Dorsolateral prefrontal cortex (tissue), 120 donors: ENCODE measurements at regions of chr14 and their contacts with region 1.

Region 1: DNA sequence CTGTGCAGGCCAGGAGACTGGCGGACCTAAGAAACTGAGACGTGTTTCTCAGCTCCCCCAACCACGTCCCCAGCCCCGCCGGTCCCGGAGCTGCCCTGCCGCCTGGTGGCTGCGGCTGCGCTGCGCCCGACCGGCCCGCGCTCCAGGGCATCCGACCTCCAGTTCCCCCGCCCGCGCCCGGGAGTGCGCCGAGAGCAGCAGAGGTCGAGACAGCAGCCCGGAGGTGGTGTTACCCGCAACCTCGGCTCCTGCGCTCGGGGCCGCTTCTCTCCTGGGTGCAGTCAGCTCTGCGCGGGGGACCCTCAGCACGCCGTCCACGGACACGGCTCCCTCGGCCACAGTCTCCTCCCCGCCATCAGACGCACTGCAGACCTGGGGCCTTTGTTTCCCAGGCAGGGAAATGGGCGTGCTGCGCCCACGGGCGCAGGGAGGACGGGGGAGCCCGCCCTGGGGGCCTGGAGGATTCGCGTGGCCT is 21.6 kb upstream of the GPR132 start:
- DNase-seq: peak in 6 of 10 donors; percentile 41 to 76 (median 62)
- H3K4me3 ChIP-seq: peak overlapping the region in 58 of 59 donors; percentile 19 to 73 (median 58)
- H3K27ac ChIP-seq: peak overlapping the region in 17 of 59 donors; percentile 17 to 74 (median 52)
- H3K27me3 ChIP-seq: peaks cover 0 to 42% (median 0%) of the 10 kb centered on the region in 45 donors
- CTCF ChIP-seq: peak in 55 of 56 donors; percentile 16 to 76 (median 60)

Region 2: DNA sequence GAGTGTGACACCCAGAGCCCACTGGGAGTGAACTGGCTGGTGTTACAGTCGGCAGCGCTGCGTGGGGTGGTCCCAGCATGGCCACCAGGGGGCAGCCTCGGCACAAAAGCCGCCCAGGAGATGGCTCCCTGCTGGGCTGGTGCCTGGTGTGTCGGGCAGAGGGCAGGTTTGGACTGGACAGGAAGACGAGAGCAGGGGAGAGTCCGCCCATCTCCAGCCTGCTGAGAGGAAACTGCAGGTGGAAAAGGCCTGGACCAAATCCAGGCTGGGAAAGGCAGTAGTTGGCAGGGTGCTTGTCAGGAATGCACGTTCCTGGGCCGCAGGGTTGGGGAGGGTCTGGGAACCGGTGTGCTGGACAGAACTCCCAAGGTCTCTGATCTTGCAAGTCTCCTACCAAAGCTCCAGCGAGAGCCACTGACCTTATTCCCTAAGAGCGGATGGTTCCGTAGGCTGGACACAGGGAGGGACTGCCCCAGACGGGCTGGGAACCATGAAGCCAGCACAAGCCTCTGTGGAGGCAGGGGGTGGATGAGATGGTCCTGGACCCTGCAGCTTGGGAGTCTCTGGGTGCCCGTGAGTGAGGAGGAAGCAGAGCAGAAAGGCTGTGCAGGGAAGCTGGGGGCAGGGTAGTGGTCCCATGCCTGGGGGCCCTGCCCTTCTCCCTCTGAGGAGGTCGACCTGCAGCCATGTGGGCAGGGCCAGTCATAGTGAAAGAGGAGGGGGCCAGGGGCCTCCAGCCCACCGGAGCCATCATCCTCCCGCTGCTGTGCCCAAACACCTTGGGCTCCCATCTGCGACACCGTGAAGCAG is 110.5 kb before region 1 on chr14:
- intact Hi-C with region 1: loop called in 1 of 2 experiments (anchors 2 kb)
- DNase-seq: peak; percentile 46 to 81 (median 68)
- H3K4me3 ChIP-seq: peak overlapping the region in 22 of 59 donors; percentile 51 to 82 (median 66)
- H3K27ac ChIP-seq: no peak overlapping the region
- H3K27me3 ChIP-seq: peaks cover 0 to 4% (median 0%) of the 10 kb centered on the region in 45 donors
- CTCF ChIP-seq: peak; percentile 50 to 92 (median 84)

Region 3: GRCh38 chr14:105020815-105021655 is 65.8 kb before region 1 on chr14 and contains the start of gene CDCA4:
- intact Hi-C with region 1: no loop called
- DNase-seq: peak; percentile 96 to 99 (median 98)
- H3K4me3 ChIP-seq: peak within 1 kb of the TSS; percentile 67 to 100 (median 86)
- H3K27ac ChIP-seq: peak within 1 kb of the TSS in 47 of 59 donors; percentile 2 to 89 (median 69)
- H3K27me3 ChIP-seq: no peaks in the 10 kb centered on the region
- CTCF ChIP-seq: peak in 21 of 56 donors; percentile 4 to 46 (median 18)
- total RNA-seq, gene CDCA4: 1.7 to 5.4 (median 3.1) TPM

Region 4: DNA sequence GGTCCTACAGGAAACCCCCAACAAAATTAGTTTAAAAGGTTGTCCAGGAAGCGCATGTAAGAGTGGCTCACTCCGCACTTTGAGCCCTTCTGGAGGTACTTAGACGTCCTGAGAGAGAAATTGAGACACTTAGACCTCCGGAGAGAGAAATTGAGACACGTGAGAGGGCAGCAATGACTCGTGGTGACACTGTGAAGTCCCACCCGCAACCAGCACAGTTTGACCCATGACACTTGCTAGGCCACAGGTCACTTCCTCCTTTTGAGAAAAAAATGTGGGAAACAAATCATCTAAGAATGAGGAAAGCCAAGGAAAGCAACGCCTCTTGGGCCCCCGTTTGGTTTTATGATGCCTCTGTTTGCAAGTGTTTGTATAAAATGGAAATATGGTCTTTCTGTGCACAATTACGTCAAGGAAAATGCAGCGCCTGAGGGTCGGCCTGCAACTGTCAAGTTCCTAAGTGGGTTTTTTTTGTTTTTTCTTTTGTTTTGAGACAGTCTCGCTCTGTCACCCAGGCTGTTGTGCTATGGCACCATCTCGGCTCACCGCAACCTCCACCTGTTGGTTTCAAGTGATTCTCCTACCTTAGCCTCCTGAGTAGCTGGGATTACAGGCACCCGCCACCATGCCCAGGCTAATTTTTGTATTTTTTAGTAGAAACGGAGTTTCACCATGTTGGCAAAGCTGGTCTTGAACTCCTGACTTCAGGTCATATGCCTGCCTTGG is 52.4 kb before region 1 on chr14:
- intact Hi-C with region 1: no loop called
- DNase-seq: no peak
- H3K4me3 ChIP-seq: no peak overlapping the region
- H3K27ac ChIP-seq: no peak overlapping the region
- H3K27me3 ChIP-seq: peaks cover 0 to 75% (median 27%) of the 10 kb centered on the region in 45 donors
- CTCF ChIP-seq: no peak

Region 5: DNA sequence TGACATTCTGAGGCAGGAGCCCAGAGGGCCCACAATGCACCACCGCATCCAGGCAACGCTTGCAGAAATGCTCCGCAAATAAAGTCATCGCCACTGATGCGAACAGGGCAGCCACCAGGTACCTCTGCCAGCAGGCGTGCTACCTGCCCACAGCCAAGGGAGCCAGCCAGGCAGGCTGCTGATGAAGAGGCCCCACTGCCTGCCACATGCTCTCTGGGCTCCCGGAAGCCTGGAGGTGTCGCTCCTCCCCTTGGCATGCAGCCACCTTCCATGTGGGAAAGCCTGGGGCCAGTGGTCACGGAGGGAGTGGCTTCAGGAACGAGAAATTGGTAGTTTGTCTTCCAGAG is 36.3 kb before region 1 on chr14:
- intact Hi-C with region 1: no loop called
- DNase-seq: no peak
- H3K4me3 ChIP-seq: no peak overlapping the region
- H3K27ac ChIP-seq: no peak overlapping the region
- H3K27me3 ChIP-seq: peaks cover 0 to 54% (median 23%) of the 10 kb centered on the region in 45 donors
- CTCF ChIP-seq: no peak

Region 6: DNA sequence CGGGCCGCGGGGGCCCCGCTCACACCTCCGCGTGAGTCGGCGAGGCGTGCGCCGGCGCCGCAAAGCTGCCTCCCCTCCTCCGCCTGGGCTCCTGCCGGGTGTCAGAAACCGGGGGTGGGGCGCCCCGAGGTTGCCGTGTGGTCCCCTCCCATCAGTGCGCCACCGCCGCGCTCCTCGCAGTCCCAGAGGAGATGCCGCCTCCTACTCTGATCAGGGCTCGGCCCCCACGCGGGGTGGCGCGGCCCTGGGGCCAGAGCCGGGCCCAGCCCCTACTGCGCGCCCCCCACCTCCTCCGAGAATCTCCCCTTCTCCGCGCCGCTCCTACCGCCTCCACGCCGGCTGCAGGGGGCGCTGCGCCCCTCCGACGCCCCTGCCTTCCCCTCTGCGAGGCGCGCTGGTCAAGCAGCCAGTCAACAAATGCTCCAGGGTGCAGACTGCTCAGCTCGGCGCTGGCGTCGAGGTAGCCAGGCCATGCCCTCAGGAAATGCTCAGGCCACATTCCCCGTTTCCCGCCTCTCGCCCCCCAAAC is 82.2 kb after region 1 on chr14:
- intact Hi-C with region 1: loop called in 1 of 2 experiments (anchors 5 kb)
- DNase-seq: peak in 1 of 10 donors; percentile 51
- H3K4me3 ChIP-seq: peak overlapping the region in 56 of 59 donors; percentile 7 to 65 (median 48)
- H3K27ac ChIP-seq: peak overlapping the region in 22 of 59 donors; percentile 5 to 77 (median 50)
- H3K27me3 ChIP-seq: peaks cover 0 to 17% (median 0%) of the 10 kb centered on the region in 45 donors
- CTCF ChIP-seq: peak in 52 of 56 donors; percentile 7 to 60 (median 44)

Region 7: GRCh38 chr14:105197271-105197670 is 110.4 kb after region 1 on chr14:
- intact Hi-C with region 1: loop called in 1 of 2 experiments (anchors 10 kb)
- DNase-seq: no peak
- H3K4me3 ChIP-seq: peak overlapping the region in 27 of 59 donors; percentile 5 to 62 (median 45)
- H3K27ac ChIP-seq: peak overlapping the region in 9 of 59 donors; percentile 14 to 75 (median 46)
- H3K27me3 ChIP-seq: peaks cover 0 to 80% (median 28%) of the 10 kb centered on the region in 45 donors
- CTCF ChIP-seq: no peak

Region 8: DNA sequence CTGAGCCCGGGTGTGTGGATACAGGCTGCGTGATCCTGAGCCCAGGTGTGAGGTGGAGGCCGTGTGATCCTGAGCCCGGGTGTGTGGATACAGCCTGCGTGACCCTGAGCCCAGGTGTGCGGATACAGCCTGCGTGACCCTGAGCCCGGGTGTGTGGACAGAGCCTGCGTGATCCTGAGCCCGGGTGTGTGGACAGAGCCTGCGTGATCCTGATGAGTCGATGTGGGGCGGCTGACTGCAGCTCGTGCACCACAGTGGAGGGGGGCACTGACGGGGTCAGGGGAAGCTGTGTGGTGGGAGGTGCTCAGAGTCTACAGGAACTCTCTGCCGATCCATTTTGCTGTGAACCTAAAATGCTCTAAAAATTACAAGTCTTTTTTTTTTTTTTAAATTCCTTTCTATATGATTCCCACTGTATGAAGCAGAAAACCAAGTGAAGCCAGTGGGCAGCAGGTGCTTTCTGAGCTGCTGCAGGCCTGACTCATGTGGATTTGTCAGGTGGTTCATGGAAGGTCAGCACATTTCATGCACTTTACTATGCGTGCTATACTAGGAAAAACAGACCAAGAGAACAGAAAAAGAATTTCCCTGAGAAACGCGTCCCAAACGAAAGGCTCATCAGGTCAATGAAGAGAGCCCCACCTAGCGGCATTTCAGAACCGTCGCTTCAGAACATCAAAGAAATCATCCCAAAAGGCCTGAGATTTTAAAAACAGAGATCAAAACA is 194.7 kb after region 1 on chr14:
- intact Hi-C with region 1: loop called (anchors 5 to 10 kb)
- DNase-seq: peak in 3 of 10 donors; percentile 26 to 61 (median 51)
- H3K4me3 ChIP-seq: no peak overlapping the region
- H3K27ac ChIP-seq: peak overlapping the region in 15 of 59 donors; percentile 4 to 77 (median 25)
- H3K27me3 ChIP-seq: no peaks in the 10 kb centered on the region
- CTCF ChIP-seq: peak; percentile 55 to 83 (median 73)

Region 9: GRCh38 chr14:105351920-105352851 is 265.3 kb after region 1 on chr14:
- intact Hi-C with region 1: loop called in 1 of 2 experiments (anchors 5 kb)
- DNase-seq: peak; percentile 75 to 90 (median 85)
- H3K4me3 ChIP-seq: peak overlapping the region in 1 of 59 donors; percentile 6
- H3K27ac ChIP-seq: peak overlapping the region in 47 of 59 donors; percentile 3 to 80 (median 53)
- H3K27me3 ChIP-seq: no peaks in the 10 kb centered on the region
- CTCF ChIP-seq: peak; percentile 51 to 94 (median 87)

Region 10: DNA sequence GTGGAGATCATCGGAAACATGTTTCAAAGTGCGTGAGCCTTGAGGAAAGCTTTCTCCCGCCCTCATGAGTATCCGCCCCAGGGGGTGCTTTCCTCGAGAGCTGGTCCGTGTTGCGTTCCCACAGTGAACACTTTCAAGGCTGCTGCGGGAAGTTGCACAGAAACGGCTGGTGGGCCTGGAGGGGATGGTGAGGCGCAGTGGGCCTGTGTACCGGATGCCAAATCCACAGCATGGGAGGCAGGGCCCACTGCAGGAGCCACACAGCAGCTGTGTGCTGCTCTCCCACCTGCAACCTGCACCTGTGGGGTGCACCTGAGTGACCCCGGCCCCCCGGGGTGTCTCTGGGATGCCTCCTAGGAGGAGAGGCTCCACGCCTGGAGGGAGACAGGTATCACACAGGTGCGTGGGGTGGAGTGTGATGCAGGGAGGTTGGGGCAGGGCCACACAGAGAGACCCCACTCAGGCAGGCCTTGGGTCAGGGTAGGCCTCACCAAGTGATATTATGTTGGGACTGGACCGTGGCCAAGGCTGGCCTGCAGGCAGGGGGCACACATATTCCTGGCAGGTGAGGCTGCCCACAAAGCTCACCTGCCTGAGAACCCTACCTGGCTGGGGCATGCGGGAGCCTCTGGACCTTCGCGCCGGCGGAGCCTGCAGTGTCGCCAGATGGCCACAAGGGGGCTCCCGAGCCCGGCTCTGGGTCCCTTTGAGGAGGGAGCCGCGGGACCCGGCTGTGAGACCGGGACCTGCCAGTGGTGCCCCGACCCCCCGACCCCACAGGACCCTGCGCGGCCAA is 450.7 kb after region 1 on chr14:
- intact Hi-C with region 1: no loop called
- DNase-seq: peak in 5 of 10 donors; percentile 37 to 72 (median 58)
- H3K4me3 ChIP-seq: peak overlapping the region in 24 of 59 donors; percentile 3 to 47 (median 28)
- H3K27ac ChIP-seq: no peak overlapping the region
- H3K27me3 ChIP-seq: peaks cover 0 to 18% (median 0%) of the 10 kb centered on the region in 45 donors
- CTCF ChIP-seq: peak; percentile 68 to 98 (median 92)